Calu3 (cell line): ENCODE measurements at regions of chr18 and their contacts with region 1.

Region 1: GRCh38 chr18:77054606-77055428 is 77.8 kb downstream of the MBP start:
- DNase-seq: peak; percentile 96
- H3K4me3 Mint-ChIP-seq: peak overlapping the region; percentile 58
- H3K27ac Mint-ChIP-seq: peak overlapping the region; percentile 77
- H3K4me1 Mint-ChIP-seq: peaks cover 61% of the 10 kb centered on the region
- H3K27me3 Mint-ChIP-seq: no peaks in the 10 kb centered on the region
- CTCF ChIP-seq: peak; percentile 83

Region 2: DNA sequence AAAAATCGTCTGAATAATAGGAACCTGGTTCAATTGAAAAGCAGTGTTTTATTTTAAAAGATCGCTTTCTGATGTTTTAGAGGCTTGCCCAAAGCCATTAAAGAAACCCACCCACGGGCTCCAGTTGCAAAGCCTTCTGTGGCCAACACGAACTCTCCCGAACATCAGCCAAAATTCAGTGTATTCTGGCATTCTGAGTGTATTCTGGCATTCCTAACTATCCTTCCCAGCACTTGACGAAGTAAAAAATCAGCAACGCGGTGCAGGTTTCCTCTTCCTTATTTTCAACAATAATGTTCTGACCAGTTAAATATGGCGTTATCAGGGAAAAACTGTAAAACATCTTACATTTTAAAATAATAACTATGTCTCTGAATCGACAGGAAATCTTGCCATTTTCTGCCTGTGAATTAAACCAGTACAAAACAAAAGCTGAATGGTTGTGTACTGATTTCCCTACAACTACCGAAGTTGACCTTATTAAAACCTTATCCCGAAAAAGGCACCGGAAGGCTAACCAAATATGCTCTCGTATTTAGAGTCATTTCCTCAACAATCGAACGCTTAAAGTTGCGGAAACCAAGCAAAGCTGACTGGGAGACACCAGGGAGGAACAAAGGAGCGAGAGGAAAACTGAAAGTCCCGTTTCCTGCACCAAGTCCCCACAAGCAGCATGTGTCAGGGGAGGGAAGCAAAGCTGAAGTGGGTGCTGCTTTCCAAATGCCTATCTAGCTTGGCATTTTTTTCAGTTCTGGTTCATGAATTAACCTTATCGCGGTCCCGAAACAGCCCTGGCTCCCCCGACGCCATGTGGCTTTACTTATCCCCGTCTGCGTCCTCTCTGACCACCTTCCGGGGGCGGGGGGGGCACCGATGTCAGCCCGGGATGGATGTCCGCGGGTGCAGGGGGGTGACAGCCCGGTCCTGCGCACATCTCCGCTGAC is 604.1 kb before region 1 on chr18:
- CTCF ChIA-PET with region 1: no interaction called
- intact Hi-C with region 1: no loop called
- DNase-seq: peak; percentile 37
- H3K4me3 Mint-ChIP-seq: peak overlapping the region; percentile 77
- H3K27ac Mint-ChIP-seq: peak overlapping the region; percentile 50
- H3K4me1 Mint-ChIP-seq: peaks cover 80% of the 10 kb centered on the region
- H3K27me3 Mint-ChIP-seq: no peaks in the 10 kb centered on the region
- CTCF ChIP-seq: no peak

Region 3: DNA sequence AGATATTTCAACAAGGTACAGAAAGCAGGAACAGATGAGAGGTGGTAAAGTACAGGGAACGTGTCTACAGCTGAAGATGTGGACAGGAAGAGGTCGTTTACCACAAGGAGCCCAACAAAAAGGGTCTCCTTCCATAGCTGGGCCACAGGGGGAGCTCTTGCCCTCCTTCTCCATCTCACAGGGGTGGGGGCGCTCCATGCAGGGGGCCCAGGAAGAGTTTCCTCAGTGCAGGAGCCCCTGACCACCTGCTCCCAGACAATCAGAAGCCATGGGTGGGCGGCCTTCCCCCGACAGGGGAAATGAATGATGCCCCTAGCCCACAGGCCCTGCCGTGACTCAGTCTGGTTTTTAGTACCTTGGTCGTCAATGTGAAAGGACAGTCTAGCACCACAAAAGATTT is 396.2 kb before region 1 on chr18:
- CTCF ChIA-PET with region 1: no interaction called
- intact Hi-C with region 1: no loop called
- DNase-seq: no peak
- H3K4me3 Mint-ChIP-seq: no peak overlapping the region
- H3K27ac Mint-ChIP-seq: no peak overlapping the region
- H3K4me1 Mint-ChIP-seq: no peaks in the 10 kb centered on the region
- H3K27me3 Mint-ChIP-seq: peaks cover 80% of the 10 kb centered on the region
- CTCF ChIP-seq: no peak

Region 4: GRCh38 chr18:76953583-76954233 is 101.1 kb before region 1 on chr18:
- CTCF ChIA-PET with region 1: no interaction called
- intact Hi-C with region 1: loop called (anchors 5 kb)
- DNase-seq: peak; percentile 71
- H3K4me3 Mint-ChIP-seq: peak overlapping the region; percentile 12
- H3K27ac Mint-ChIP-seq: no peak overlapping the region
- H3K4me1 Mint-ChIP-seq: peaks cover 21% of the 10 kb centered on the region
- H3K27me3 Mint-ChIP-seq: peaks cover 41% of the 10 kb centered on the region
- CTCF ChIP-seq: no peak

Region 5: DNA sequence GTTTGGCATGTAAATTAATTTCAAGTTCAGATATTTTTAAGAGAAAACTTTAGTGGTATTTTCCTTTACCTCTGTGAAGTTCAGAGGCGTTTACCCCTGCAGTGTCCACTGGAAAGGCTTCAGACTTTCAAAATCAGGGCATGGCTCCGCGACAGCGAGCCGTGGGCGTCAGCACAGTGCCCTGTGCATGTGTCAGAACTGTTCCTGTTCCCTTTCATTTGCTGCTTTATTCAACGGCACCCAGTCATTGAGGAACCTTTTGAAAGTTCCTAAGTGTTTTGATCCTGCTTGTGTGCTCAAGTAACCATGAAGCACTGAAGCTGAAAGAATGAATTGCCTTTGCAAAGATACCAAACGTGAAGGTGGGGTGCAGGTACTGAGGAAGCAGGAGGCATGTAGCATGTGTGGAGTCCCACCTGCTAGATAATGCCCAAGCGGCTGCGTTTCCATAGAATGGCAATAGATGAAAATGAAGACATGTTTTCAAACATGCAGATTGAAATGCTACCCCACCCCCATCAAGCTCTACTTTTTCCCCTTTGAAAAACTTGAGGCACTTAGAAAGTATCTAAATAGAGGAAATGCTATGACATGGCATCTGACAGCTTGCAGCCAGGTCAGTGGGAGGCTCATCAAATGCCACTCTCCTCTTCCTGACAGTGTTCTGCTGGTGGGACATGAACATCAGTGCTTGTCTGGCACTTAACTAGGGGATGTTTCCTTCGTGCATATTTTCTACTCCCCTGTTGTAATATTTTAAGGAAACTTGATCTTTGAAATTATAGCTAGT is 83.9 kb before region 1 on chr18:
- CTCF ChIA-PET with region 1: no interaction called
- intact Hi-C with region 1: no loop called
- DNase-seq: no peak
- H3K4me3 Mint-ChIP-seq: no peak overlapping the region
- H3K27ac Mint-ChIP-seq: no peak overlapping the region
- H3K4me1 Mint-ChIP-seq: no peaks in the 10 kb centered on the region
- H3K27me3 Mint-ChIP-seq: peaks cover 35% of the 10 kb centered on the region
- CTCF ChIP-seq: no peak

Region 6: GRCh38 chr18:77067291-77068061 is 12.7 kb after region 1 on chr18:
- CTCF ChIA-PET with region 1: interaction called, 28 read pairs
- intact Hi-C with region 1: loop called (anchors 1 kb)
- DNase-seq: peak; percentile 91
- H3K4me3 Mint-ChIP-seq: peak overlapping the region; percentile 50
- H3K27ac Mint-ChIP-seq: peak overlapping the region; percentile 96
- H3K4me1 Mint-ChIP-seq: peaks cover 91% of the 10 kb centered on the region
- H3K27me3 Mint-ChIP-seq: no peaks in the 10 kb centered on the region
- CTCF ChIP-seq: peak; percentile 16

Region 7: DNA sequence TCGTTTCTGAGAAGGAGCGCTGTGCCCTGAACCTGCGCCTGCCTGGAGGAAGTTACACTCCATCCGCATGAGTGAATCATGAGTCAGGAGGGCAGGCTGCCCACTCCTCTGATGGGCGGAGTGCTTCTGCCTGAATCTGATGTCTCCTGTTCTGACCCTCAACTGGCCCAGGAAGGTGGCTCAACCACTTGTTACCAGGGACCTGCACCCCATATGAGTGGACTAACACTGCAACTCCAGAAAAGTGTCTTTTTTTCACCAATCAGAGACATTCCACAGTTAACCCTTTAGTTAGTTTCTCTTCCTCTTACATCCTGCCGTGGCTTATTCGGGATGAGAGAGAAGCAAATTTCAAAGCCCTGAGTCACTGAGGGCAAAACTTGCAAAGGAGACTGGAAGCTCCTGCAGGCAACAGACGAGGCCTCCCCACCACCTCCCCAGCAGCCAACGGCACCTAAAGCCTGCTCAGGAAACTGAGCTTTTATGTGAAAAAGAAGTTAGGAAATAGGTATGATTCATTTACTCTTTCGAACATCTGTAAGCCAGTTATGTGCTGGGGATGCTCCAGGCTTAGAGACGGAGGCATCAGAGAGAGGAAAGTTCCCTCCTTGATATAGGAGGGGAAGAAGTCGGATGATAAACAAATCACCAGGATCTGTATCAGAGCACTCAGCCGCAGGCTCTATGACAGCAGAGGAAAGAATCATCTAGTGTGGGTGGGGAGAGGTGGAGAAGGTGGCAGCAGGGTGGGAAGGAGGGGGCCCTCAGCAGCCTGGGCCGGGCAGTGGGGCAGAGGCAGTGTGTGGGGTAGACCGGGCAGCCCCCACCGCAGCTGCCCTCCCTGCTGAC is 46.8 kb after region 1 on chr18:
- CTCF ChIA-PET with region 1: interaction called, 15 read pairs
- intact Hi-C with region 1: loop called (anchors 2 kb)
- DNase-seq: peak; percentile 94
- H3K4me3 Mint-ChIP-seq: peak overlapping the region; percentile 57
- H3K27ac Mint-ChIP-seq: peak overlapping the region; percentile 94
- H3K4me1 Mint-ChIP-seq: peaks cover 81% of the 10 kb centered on the region
- H3K27me3 Mint-ChIP-seq: no peaks in the 10 kb centered on the region
- CTCF ChIP-seq: no peak

Region 8: DNA sequence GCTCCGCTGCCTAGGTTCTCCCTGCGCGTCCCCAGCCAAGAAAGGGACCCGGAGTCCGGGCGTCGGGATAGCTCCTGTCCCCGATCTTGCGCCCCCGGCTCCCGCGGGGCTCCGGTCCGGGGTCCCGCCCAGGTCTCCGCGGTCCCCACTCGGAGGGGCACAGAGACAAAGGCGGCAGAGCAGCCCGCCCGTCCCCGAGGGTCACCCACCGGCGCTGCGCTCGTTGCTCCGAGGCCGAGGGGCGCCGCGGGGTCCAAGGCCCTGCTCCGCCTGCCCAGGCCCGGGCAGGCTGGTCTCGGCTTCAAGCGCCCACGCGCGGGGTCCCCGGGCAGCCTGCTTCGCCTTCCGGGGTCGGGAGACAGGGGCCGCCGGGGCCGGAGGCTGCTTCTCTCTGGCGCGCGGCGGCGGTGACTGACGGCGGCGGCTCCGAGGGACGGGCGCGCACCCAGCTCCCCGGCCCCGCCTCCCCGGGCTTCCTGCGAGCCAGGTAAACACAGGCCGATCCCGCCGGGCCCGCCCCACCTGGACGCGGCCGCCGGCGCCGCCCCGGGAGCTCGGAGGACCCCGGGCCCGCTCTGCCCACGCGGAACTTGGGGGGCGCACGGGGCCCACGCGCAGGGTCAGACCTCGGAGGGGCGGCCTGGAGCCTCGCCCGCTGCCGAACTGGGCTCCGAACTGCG is 77.7 kb after region 1 on chr18 and contains the start of gene MBP:
- CTCF ChIA-PET with region 1: interaction called, 7 read pairs
- intact Hi-C with region 1: loop called (anchors 1 kb)
- DNase-seq: peak; percentile 99
- H3K4me3 Mint-ChIP-seq: peak within 1 kb of the TSS; percentile 93
- H3K27ac Mint-ChIP-seq: peak within 1 kb of the TSS; percentile 72
- H3K4me1 Mint-ChIP-seq: peaks cover 32% of the 10 kb centered on the region
- H3K27me3 Mint-ChIP-seq: no peaks in the 10 kb centered on the region
- CTCF ChIP-seq: no peak
- total RNA-seq, gene MBP: 221 and 257 TPM in 2 replicates